Mammary epithelial cell (primary cell): ENCODE measurements at regions of chr9 and their contacts with region 1.

Region 1: DNA sequence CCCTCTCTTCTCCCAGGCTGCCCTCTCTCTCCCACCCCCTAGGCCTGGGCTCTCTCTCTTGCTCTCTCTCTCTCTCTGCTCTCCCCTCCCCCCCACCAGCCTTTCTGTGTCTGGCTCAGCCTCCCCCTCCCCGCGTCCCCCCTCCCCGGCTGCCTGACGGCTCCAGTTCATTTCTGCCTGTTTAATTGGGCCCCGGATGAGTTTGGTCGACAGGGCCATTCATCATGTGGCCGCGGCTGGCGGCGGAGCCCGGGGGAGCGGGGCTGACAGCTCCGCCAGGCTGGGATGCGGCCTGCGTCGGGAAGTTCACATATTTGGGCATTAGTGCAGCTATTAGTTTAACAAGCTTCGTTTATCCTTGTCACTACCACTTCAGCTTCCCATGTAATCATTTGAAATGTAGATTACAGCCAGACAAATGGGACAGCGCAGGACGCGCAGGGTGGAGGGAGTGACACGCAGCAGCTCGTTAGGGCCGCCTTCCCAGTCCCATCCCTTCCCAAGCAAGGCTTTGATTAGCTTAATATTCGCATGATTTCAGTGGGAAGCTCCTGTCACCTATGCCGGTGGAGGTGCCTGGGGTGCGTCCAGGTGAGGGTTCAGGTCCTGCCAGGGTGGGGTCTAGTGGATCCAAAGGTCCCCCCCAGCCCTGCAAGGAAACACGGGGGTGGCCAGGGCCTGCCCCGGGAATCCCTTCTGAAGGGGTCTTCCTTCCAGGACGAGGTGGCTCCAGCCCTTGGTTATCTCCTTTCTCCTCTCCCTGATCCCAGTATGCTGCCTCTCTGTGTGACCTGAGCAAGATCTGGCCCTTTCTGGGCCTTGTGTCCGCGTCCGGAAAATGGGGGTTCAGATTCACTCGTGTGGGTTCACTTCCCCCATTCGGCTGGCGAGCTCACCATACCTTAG is 214.8 kb downstream of the PAX5 start:
- DNase-seq: no peak
- H3K4me3 ChIP-seq: no peak overlapping the region
- H3K27ac ChIP-seq: no peak overlapping the region
- H3K4me1 ChIP-seq: peaks cover 3% of the 10 kb centered on the region
- H3K27me3 ChIP-seq: peaks cover 4% of the 10 kb centered on the region
- CTCF ChIP-seq: no peak

Region 2: DNA sequence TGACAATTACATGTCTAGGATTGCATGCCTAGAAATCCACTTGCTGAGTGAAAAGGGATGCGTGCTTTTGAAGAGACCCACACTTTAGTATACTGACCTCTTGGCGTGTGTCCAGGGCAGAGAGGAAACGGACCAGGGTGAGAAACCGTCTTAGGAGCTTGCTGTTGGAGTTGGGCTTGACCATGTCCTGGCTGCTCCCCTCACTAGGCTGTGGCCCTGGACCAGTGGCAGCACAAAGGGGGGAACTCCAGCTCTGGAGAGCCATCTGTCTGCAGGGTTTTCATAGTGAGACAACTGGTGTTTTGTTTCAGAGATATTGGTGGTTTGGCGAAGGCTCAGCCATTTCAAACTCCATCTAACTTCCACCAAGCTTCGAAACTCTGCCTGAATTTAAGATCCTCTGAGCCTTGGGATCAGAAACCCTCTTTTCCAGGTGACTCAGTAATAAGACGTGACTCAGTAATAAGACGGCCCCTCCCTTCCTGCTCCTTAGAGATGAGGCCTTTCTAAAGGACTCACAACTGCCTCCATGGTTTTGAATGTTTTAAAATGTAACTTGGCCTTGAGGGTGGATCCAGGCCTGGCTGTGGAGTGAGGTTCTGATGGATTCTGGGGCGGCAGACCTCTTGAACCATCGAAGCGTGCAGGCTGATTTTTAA is 80.8 kb before region 1 on chr9:
- CTCF ChIA-PET with region 1: no interaction called
- dilution Hi-C with region 1: no loop called
- in situ Hi-C with region 1: no loop called
- intact Hi-C with region 1: no loop called
- DNase-seq: peak; percentile 74
- H3K4me3 ChIP-seq: no peak overlapping the region
- H3K27ac ChIP-seq: peak overlapping the region; percentile 58
- H3K4me1 ChIP-seq: peaks cover 4% of the 10 kb centered on the region
- H3K27me3 ChIP-seq: no peaks in the 10 kb centered on the region
- CTCF ChIP-seq: no peak

Region 3: GRCh38 chr9:36764364-36765076 is 54.7 kb before region 1 on chr9:
- CTCF ChIA-PET with region 1: no interaction called
- dilution Hi-C with region 1: loop called (anchors 5 kb)
- in situ Hi-C with region 1: no loop called
- intact Hi-C with region 1: no loop called
- DNase-seq: no peak
- H3K4me3 ChIP-seq: no peak overlapping the region
- H3K27ac ChIP-seq: no peak overlapping the region
- H3K4me1 ChIP-seq: no peaks in the 10 kb centered on the region
- H3K27me3 ChIP-seq: peaks cover 4% of the 10 kb centered on the region
- CTCF ChIP-seq: no peak

Region 4: GRCh38 chr9:36855448-36856315 is 36.5 kb after region 1 on chr9:
- CTCF ChIA-PET with region 1: no interaction called
- dilution Hi-C with region 1: loop called (anchors 5 kb)
- in situ Hi-C with region 1: no loop called
- intact Hi-C with region 1: no loop called
- DNase-seq: no peak
- H3K4me3 ChIP-seq: no peak overlapping the region
- H3K27ac ChIP-seq: no peak overlapping the region
- H3K4me1 ChIP-seq: no peaks in the 10 kb centered on the region
- H3K27me3 ChIP-seq: peaks cover 2% of the 10 kb centered on the region
- CTCF ChIP-seq: no peak

Region 5: DNA sequence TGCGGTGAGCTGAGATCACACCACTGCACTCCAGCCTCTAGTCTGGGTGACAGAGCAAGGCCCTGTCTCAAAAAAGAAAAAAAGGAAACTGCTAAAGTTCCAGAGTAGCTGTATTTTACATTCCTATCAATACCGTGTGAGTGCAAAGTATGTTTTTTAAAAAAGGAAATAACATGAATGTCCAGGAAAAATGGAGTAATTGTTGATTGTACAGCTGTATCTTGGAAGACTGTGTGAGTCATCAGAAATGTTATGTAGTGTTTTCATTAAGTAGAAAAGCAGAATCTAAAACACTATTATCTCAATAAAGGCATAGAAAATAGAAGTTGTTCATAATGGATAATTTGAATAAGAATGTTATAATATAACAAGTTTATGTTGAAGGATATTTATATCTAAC is 355.0 kb after region 1 on chr9:
- CTCF ChIA-PET with region 1: no interaction called
- dilution Hi-C with region 1: no loop called
- in situ Hi-C with region 1: no loop called
- intact Hi-C with region 1: no loop called
- DNase-seq: no peak
- H3K4me3 ChIP-seq: no peak overlapping the region
- H3K27ac ChIP-seq: no peak overlapping the region
- H3K4me1 ChIP-seq: no peaks in the 10 kb centered on the region
- H3K27me3 ChIP-seq: no peaks in the 10 kb centered on the region
- CTCF ChIP-seq: no peak